ENCODE measurements at regions of chr1 and their contacts with region 1.

Region 1: GRCh38 chr1:88800382-88801051 is 90.8 kb downstream of the GTF2B start:
- DNase-seq: peak in 16 of 42 donors; percentile 4 to 70 (median 28)

Region 2: DNA sequence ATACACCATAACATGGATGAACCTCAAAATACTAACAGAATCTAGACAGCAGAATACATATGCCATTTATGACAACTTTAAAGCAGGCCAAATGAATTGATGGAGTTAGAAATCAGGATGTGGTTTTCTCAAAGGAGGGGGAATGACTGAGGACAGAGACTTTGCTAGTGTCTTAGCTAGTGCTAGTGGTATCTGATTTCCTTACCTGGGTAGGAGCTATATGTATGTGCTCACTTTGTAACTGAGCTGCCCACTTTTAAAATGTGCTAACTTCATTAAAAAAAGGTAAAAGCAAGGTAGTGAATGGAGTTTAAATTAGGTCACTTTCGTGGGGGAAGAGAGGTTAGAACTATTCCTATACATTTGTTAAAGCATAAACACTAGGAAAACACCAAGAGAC is 88.2 kb after region 1 on chr1:
- intact Hi-C with region 1: loop called (anchors 5 kb)
- DNase-seq: no peak

Measured in head of caudate nucleus (tissue), 42 donors.